Ovary (tissue), 10 donors: ENCODE measurements at regions of chr2 and their contacts with region 1.

Region 1: DNA sequence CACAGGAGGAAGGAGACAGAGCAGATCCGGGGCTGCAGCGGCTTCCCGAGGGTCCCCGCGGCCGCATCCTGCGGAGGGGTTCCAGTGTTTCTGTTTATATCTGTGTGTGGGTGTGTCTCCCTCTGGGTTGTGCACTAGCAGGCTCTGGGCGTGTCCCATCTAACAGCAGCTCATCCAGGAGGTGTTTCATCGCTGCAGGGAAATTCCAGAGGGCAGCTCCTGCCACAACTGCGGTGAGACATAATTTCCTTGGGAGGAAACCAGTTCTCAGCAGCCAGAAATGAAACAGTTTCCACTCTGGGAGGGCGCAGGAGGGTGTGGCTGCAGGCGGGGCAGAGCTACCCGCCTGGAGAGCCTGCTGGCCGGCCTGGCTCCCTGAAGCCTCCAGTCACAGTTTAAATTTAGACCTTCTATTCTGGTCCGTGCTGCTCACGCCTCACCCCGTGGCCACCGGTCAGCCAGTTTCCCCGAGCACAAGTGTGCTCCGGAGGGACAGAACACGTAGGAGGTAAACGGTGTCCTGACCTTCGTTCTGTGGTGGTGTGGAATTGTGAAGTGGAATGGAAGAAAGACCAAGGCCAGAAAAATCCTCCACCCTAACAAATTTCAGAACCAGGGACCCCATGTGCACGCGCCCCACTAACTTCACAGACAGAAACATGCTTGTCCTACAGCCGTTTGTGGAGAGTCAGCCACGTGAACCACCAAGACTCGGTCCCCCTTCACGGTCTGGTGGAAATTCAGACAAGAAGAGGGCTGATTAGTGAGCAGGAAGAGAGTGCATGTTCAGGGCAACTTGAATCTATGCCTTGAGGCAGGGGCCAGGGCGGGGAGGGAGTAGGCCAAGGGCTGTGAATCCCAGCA is 50.2 kb downstream of the TEX44 start:
- DNase-seq: peak; percentile 74 to 86 (median 79)
- H3K4me3 ChIP-seq: peak overlapping the region; percentile 14
- H3K27ac ChIP-seq: peak overlapping the region; percentile 35 to 73
- H3K4me1 ChIP-seq: peaks cover 4% of the 10 kb centered on the region
- H3K27me3 ChIP-seq: no peaks in the 10 kb centered on the region
- CTCF ChIP-seq: no peak
- EP300 ChIP-seq: peak; percentile 70
- POLR2A ChIP-seq: no peak

Region 2: DNA sequence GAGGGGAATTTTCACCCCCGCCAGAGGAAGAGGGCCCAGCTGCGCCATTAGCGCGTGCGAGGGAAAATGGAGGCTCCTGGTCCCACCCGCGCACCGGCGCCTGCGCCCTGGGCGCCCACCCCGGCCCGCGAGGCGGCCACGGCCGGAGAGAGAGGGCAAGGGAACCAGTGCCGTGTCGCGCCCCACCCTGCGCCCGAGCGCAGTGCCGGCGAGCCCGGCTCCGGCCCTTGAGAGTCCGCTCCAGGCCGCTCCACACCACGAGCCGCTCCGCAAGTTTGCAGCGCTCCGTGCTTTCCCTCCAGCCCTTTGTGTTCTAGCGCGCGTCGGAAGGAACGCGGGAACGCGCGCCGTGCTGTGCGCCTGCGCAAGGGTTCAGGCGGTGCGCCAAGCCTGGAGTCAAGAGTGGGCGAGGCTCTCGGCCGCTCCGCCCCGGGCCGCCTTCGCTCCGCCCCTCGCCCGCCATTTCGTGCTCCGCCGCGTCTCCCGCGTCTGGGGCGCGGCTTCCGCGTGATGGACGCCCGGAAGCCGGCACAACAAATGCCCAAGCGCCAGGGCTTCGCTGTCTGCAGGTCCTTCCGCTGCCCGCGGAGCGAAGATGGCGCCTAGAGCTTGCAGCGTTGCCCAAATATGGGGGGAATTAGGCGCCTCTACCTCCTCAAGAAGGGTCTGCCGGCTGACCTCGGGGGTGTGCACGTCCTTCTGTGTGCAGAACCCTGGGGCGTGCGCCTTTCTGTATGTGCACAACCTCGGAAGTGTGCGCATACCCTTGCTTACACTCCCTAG is 19.4 kb after region 1 on chr2:
- intact Hi-C with region 1: loop called in 1 of 4 experiments (anchors 2 kb)
- DNase-seq: peak; percentile 96 to 100 (median 98)
- H3K4me3 ChIP-seq: peak overlapping the region; percentile 47
- H3K27ac ChIP-seq: peak overlapping the region; percentile 69 to 85
- H3K4me1 ChIP-seq: peaks cover 5% of the 10 kb centered on the region
- H3K27me3 ChIP-seq: no peaks in the 10 kb centered on the region
- CTCF ChIP-seq: peak in 2 of 3 donors; percentile 19 to 44
- EP300 ChIP-seq: peak; percentile 4
- POLR2A ChIP-seq: peak; percentile 94